ENCODE measurements at regions of chr1 and their contacts with region 1.

Region 1: GRCh38 chr1:87528754-87529517 is 200.3 kb downstream of the LMO4 start:
- DNase-seq: no peak

Region 2: DNA sequence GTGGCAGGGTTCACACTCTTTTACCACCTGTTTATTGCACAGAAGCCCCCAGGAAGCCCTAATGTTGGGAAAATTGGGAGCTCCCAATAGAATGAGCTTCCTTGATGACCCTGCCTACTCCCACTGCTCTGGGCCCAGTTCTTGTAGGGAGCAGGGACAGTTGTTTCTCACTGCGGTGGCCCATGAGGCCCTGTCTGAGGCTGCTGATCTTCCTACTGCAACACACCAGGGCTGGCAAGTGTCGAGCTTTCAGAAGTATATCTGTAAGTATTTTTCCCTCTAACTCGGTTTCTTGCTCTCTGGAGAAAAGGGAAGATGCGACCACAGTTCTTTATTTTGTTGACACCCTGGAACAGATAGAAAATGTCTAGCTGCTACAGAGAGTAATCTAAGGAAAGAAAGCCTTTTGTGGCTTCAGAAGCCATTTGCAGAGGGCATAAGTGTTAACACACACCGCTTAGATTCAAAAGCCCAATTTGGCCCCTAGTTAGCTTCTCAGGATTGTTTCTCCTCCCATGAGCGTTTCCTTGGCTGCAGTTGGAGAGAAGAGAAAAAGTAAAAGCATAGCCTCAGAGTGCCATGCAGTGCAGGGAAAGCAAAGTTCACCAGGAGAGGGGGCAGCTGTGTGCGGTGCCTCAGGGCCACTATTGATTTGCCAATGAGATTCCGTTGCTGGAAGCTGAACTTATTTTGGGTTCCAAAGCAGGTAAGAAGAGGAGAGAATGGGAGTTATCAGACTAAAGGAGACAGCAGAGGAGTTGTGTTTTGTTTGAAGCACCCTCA is 717.6 kb before region 1 on chr1:
- intact Hi-C with region 1: loop called in 1 of 2 experiments (anchors 5 kb)
- DNase-seq: no peak

Region 3: DNA sequence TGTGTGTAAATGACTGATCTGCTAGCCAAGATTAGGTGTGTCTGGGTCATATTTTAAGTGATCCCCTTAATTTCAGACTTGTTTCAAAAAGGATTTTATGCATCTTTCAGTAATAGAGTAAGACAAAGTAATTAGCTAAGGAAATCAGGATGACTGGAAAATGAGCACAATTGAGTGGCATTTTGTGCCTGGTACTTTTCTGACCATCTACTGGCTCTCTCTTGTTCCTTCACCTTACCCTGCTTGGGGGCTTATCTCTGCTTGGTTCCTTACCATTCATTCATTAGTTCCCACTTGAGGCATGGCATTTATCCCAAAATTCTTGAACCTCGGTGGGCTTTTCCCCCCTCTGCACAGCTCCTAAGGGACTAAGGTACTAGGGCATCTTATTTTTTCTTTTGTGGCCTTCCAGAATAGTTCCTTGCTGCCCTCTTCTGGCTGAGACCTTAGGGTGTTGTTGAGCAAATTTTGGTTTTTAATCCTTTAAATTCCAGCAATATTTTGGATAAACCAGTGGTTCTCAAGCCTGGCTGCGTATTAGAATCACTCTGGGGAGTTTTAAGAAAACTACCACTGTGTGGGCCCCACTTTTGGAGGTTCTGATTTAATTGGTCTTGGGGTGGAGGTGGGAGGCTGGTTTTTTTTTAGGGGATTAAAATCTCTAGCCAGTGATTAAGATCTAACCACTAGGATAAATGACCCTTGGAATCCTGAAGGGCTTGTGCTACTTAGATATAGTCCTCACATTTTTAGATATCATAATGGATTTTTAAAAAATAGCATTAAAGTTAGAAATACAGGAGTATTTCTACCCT is 563.7 kb before region 1 on chr1:
- intact Hi-C with region 1: no loop called
- DNase-seq: no peak

Measured in posterior vena cava (tissue), 2 donors.